ENCODE measurements at regions of chr16 and their contacts with region 1.

Region 1: DNA sequence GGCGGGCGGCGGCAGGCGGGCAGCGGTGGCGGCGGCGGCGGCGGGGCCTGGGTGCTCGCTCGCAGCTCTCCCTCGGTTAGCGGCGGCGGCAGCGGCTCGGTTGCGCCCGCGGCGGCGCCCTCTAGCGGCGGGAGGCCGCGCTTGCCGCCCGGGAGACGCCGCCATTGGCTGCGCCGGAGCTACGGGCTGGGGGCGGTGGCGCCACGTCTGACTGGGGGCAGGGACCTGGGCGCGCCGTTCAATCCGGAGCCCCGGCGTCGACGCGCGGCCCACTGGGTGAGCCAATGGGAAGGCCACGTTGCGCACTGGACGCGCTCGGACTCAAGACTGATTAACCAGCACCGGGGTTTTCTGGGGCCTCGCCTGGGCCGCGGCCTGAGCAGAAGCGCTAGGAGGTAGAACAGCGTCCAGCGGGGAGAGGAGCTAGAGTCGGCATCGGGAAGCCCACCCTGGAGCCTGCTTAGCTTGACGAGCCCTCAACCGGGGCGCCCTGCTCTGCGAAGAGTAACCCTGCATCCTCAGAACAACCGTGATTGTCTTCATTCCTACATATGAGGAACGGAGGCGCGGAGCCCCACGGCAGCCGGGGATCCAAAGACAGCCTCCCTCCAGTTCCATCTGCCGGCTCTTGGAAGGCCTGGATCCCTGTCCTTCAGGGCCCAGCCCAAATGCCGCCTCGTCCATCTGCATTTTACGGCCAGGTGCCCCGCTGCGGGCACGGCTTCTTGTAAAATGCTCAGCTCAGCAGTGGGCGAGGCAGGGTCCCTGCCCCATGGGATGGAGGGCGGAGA is at the start of gene ZC3H7A:
- DNase-seq: peak; percentile 82 to 98 (median 91)
- ATAC-seq: peak; percentile 90
- H3K4me3 ChIP-seq: peak within 1 kb of the TSS; percentile 91
- H3K4me3 Mint-ChIP-seq: peak within 1 kb of the TSS; percentile 97
- H3K27ac ChIP-seq: peak within 1 kb of the TSS; percentile 93 to 94
- H3K27ac Mint-ChIP-seq: peak within 1 kb of the TSS; percentile 100
- H3K4me1 ChIP-seq: peaks cover 68% of the 10 kb centered on the region
- H3K4me1 Mint-ChIP-seq: peaks cover 80% of the 10 kb centered on the region
- H3K27me3 ChIP-seq: no peaks in the 10 kb centered on the region
- H3K27me3 Mint-ChIP-seq: no peaks in the 10 kb centered on the region
- CTCF ChIP-seq: peak; percentile 65
- total RNA-seq, gene ZC3H7A: 131 to 143 TPM

Region 2: DNA sequence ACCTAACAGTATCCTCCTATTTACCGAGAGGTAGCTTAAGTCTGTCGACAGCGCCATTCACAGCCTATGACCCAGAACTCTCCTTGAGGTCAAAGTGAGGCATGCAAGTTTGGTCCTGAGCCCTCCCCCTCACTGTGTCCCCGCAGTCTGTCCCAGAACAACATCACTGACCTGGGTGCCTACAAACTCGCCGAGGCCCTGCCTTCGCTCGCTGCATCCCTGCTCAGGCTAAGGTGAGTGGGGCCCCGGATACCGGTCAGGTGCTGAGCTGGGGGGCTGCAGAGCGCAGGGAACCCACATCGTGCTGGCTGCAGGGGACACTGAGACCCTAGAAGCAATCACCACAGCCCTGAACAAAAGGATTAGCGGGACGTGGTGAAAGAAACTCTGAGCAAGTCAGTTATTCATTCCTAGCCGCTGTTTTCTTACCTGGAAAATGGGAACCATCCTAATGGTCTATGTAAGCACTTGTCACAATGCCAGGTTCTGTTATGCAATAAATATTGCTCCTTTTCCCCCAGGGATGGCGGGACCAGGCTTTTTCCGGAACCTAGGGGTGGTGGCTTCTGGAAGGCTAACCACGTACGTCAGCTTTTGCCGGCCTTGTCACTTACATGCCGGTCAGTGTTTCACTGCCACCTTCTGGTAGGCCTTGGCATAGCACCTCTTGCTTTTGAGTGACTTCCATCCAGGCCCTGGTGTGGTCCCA is 878.9 kb before region 1 on chr16:
- CTCF ChIA-PET with region 1: no interaction called
- POLR2A ChIA-PET with region 1: no interaction called
- intact Hi-C with region 1: no loop called
- DNase-seq: peak; percentile 55 to 87 (median 71)
- ATAC-seq: peak; percentile 56
- H3K4me3 ChIP-seq: no peak overlapping the region
- H3K4me3 Mint-ChIP-seq: no peak overlapping the region
- H3K27ac ChIP-seq: no peak overlapping the region
- H3K27ac Mint-ChIP-seq: no peak overlapping the region
- H3K4me1 ChIP-seq: peaks cover 7% of the 10 kb centered on the region
- H3K4me1 Mint-ChIP-seq: peaks cover 4% of the 10 kb centered on the region
- H3K27me3 ChIP-seq: no peaks in the 10 kb centered on the region
- H3K27me3 Mint-ChIP-seq: no peaks in the 10 kb centered on the region
- CTCF ChIP-seq: peak; percentile 83

Region 3: GRCh38 chr16:11667824-11668622 is 129.3 kb before region 1 on chr16 and contains the start of gene SNN:
- CTCF ChIA-PET with region 1: no interaction called
- POLR2A ChIA-PET with region 1: no interaction called
- intact Hi-C with region 1: loop called in 1 of 2 experiments (anchors 5 kb)
- DNase-seq: peak; percentile 72 to 94 (median 84)
- ATAC-seq: peak; percentile 84
- H3K4me3 ChIP-seq: peak within 1 kb of the TSS; percentile 62
- H3K4me3 Mint-ChIP-seq: peak within 1 kb of the TSS; percentile 97
- H3K27ac ChIP-seq: peak within 1 kb of the TSS; percentile 57
- H3K27ac Mint-ChIP-seq: peak within 1 kb of the TSS; percentile 94
- H3K4me1 ChIP-seq: peaks cover 88% of the 10 kb centered on the region
- H3K4me1 Mint-ChIP-seq: peaks cover 73% of the 10 kb centered on the region
- H3K27me3 ChIP-seq: no peaks in the 10 kb centered on the region
- H3K27me3 Mint-ChIP-seq: no peaks in the 10 kb centered on the region
- CTCF ChIP-seq: no peak
- total RNA-seq, gene SNN: 76.3 to 79.7 TPM

Region 4: DNA sequence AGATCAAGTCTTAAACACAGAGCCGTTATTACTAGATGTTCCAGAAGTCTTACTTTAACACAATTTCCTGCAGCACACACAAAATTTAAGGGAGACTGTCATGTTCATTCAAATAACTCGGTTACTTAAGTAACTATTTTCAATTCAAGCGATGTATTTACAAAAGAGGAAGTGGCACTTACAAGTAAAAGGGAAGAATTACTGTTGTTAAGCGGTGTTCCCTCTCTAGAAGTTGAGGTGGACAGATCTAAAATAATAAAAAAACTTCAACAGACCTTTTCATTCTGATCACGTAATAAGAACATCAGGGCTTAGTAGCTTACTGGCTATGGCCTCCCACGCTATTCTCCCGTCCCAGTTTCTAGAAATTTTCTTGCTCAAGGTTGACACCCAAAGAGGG is 28.5 kb before region 1 on chr16:
- CTCF ChIA-PET with region 1: interaction called, 18 read pairs
- POLR2A ChIA-PET with region 1: interaction called, 21 read pairs
- intact Hi-C with region 1: loop called in 1 of 2 experiments (anchors 1 kb)
- DNase-seq: no peak
- ATAC-seq: no peak
- H3K4me3 ChIP-seq: no peak overlapping the region
- H3K4me3 Mint-ChIP-seq: no peak overlapping the region
- H3K27ac ChIP-seq: peak overlapping the region in 1 of 2 donors; percentile 2
- H3K27ac Mint-ChIP-seq: peak overlapping the region; percentile 58
- H3K4me1 ChIP-seq: no peaks in the 10 kb centered on the region
- H3K4me1 Mint-ChIP-seq: peaks cover 16% of the 10 kb centered on the region
- H3K27me3 ChIP-seq: no peaks in the 10 kb centered on the region
- H3K27me3 Mint-ChIP-seq: no peaks in the 10 kb centered on the region
- CTCF ChIP-seq: no peak

Region 5: DNA sequence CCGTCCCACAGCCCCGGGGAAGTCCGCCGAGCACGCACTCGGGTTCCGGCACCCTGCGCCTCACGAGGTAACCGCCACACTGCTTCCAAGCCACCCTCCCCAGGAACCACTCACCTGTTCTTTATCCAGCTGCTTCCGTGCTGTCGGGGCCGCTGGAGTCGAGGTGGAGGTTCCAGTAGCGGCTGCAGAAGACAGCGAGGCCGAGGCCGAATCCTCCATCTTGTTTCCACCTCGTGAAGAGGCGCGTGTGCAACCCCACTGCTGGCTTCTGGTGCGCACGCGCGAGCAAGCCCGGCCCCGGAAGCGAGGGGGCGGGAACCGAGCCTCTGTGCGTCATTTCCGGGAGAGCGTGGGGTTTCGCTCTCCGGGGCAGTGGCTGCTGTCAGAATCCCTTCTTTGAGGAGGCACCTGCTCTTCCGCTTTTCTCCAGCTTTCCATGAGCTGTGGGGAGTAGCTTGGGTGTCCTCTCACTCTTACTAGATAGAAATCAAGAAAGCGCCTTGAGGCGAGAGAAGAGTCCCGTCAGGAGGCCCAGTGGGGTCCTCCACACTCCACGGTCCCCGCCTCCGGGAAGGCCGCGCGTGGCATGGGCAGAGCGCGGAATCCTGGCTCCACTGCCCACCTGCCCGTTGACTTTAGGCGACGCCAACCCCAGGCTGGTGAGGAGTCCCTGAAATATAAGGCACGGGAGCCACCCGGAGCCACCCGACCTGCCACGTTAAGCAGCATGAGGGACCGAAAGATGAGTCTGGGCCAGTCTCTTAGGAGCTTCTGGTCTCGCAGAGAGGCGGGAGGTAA is 54.1 kb after region 1 on chr16 and contains the start of gene RSL1D1:
- CTCF ChIA-PET with region 1: interaction called, 5 read pairs
- POLR2A ChIA-PET with region 1: interaction called, 32 read pairs
- intact Hi-C with region 1: loop called in 1 of 2 experiments (anchors 1 kb)
- DNase-seq: peak; percentile 87 to 98 (median 92)
- ATAC-seq: peak; percentile 85
- H3K4me3 ChIP-seq: peak within 1 kb of the TSS; percentile 75
- H3K4me3 Mint-ChIP-seq: peak within 1 kb of the TSS; percentile 97
- H3K27ac ChIP-seq: peak within 1 kb of the TSS; percentile 78 to 86
- H3K27ac Mint-ChIP-seq: peak within 1 kb of the TSS; percentile 96
- H3K4me1 ChIP-seq: peaks cover 42% of the 10 kb centered on the region
- H3K4me1 Mint-ChIP-seq: peaks cover 68% of the 10 kb centered on the region
- H3K27me3 ChIP-seq: no peaks in the 10 kb centered on the region
- H3K27me3 Mint-ChIP-seq: no peaks in the 10 kb centered on the region
- CTCF ChIP-seq: no peak
- total RNA-seq, gene RSL1D1: 224 to 237 TPM

Region 6: DNA sequence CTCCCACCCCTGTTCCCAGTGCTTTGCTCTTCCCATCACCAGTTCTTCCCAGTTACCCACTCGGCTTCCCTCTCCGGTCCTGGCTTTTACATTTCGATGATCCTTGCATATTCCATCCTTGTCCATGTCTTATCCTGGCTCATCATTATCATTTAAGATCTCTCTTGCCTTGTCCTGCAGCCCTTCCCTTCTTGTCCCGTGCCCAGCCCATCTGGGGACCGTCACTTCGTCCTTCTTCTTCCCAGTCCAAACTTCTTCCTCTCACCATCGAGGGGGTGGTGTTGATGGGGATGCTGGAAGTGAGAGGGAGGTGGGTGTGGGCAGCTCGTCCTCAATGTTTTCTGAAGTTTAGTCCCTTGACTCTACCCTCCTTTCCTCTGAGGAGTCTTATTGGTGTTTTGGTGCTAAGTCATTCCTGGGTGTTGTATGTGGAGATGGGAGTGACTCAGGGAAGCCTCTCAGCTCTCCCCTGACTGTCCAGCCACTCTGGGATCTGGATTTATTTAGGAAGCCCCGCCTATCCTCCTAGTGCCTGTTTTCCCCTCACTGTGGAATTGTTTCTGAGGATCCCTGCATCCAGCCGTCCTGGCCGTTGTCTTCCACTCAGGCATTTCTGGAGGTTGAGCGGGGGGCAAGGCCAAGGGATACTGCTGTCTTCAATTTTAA is 180.1 kb after region 1 on chr16:
- CTCF ChIA-PET with region 1: no interaction called
- POLR2A ChIA-PET with region 1: no interaction called
- intact Hi-C with region 1: loop called in 1 of 2 experiments (anchors 2 kb)
- DNase-seq: peak in 2 of 14 experiments; percentile 7 to 9
- ATAC-seq: no peak
- H3K4me3 ChIP-seq: peak overlapping the region; percentile 99
- H3K4me3 Mint-ChIP-seq: peak overlapping the region; percentile 96
- H3K27ac ChIP-seq: no peak overlapping the region
- H3K27ac Mint-ChIP-seq: peak overlapping the region; percentile 81
- H3K4me1 ChIP-seq: peaks cover 25% of the 10 kb centered on the region
- H3K4me1 Mint-ChIP-seq: peaks cover 40% of the 10 kb centered on the region
- H3K27me3 ChIP-seq: no peaks in the 10 kb centered on the region
- H3K27me3 Mint-ChIP-seq: no peaks in the 10 kb centered on the region
- CTCF ChIP-seq: no peak

Region 7: DNA sequence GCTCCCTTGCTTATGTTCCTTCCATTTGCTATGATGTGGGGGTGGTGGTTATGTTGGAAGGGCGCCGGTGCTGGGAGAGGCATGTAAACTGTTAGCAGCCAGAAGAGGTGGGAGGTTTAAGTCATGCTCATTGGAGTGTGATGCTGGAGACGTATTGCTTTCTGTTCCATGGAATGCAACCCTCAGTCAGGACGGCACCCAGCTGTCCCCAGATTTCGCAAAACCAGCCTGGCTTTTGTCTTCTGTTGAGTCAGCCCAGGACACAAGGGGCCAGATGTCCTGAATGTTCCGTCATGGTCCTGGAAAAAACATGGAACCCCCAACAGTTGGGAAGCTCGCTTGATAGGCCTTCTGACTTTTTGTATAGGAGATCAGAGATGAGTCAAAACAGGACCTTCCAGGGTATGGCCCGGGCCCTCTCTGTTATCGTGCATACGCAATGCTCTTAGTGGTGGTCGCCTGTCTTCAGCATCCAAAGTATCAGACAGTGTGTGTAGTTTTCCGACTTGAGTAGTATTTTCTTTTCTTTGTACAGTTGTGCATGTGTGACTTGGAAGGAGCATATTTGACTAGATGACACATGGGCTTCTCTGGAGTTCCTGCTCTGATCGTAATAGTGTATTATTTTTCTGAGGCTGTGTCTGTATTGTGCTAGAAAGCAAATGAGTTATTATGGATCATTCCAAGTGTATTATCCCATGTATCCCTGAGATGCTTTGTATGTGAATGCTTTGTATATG is 381.1 kb after region 1 on chr16:
- CTCF ChIA-PET with region 1: no interaction called
- POLR2A ChIA-PET with region 1: no interaction called
- intact Hi-C with region 1: no loop called
- DNase-seq: no peak
- ATAC-seq: no peak
- H3K4me3 ChIP-seq: no peak overlapping the region
- H3K4me3 Mint-ChIP-seq: no peak overlapping the region
- H3K27ac ChIP-seq: no peak overlapping the region
- H3K27ac Mint-ChIP-seq: no peak overlapping the region
- H3K4me1 ChIP-seq: no peaks in the 10 kb centered on the region
- H3K4me1 Mint-ChIP-seq: peaks cover 10% of the 10 kb centered on the region
- H3K27me3 ChIP-seq: no peaks in the 10 kb centered on the region
- H3K27me3 Mint-ChIP-seq: no peaks in the 10 kb centered on the region
- CTCF ChIP-seq: no peak